CD4-positive, alpha-beta memory T cell (primary cell): ENCODE measurements at regions of chr17 and their contacts with region 1.

Region 1: DNA sequence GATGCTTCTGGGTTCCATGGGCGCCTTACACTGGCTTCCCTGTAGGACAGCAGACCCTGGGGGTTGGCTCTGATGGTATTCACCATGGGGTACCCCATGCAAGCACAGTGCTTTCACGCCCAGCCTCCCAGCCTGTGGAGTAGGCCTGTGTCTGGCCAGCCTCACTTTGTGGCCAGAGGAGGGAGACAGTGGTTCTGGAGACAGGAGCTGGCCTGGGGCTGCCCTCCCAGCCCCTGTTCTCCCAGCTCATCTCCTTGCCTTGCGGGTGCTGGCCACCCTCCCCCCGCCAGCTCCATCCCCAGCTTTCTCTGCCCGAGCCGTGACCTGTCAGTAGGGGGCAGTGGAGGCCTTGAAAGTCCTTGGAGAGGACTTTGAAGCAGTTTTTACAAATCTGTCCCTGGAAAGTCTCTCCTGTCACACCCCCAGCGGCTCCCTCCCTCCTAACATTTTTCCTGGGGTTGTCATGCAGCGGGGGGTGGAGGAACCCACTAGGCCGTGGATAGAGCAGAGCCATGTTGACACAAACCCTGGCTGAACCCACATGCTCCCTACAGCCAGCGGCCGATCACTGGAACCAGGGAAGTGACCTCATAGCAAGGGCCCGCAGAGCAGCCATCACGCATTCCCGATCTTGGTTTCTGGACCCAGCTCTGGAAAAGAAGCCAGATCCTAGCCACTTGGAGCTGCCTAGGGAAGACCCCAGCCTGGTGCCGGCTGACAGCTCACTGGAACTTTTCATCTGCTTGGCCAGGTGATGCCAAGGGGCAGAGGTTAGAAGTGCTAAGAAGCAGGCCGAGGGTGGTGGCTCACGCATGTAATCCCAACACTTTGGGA is 289.4 kb downstream of the SEC14L1 start:
- DNase-seq: peak; percentile 74 to 84 (median 77)
- H3K4me3 ChIP-seq: no peak overlapping the region
- H3K4me3 Mint-ChIP-seq: peak overlapping the region in 5 of 8 donors; percentile 29 to 68 (median 47)
- H3K27ac ChIP-seq: no peak overlapping the region
- H3K27ac Mint-ChIP-seq: peak overlapping the region; percentile 64 to 90 (median 80)
- H3K4me1 ChIP-seq: peaks cover 100% of the 10 kb centered on the region
- H3K4me1 Mint-ChIP-seq: peaks cover 55 to 96% (median 78%) of the 10 kb centered on the region in 4 donors
- H3K27me3 ChIP-seq: no peaks in the 10 kb centered on the region
- H3K27me3 Mint-ChIP-seq: no peaks in the 10 kb centered on the region

Region 2: DNA sequence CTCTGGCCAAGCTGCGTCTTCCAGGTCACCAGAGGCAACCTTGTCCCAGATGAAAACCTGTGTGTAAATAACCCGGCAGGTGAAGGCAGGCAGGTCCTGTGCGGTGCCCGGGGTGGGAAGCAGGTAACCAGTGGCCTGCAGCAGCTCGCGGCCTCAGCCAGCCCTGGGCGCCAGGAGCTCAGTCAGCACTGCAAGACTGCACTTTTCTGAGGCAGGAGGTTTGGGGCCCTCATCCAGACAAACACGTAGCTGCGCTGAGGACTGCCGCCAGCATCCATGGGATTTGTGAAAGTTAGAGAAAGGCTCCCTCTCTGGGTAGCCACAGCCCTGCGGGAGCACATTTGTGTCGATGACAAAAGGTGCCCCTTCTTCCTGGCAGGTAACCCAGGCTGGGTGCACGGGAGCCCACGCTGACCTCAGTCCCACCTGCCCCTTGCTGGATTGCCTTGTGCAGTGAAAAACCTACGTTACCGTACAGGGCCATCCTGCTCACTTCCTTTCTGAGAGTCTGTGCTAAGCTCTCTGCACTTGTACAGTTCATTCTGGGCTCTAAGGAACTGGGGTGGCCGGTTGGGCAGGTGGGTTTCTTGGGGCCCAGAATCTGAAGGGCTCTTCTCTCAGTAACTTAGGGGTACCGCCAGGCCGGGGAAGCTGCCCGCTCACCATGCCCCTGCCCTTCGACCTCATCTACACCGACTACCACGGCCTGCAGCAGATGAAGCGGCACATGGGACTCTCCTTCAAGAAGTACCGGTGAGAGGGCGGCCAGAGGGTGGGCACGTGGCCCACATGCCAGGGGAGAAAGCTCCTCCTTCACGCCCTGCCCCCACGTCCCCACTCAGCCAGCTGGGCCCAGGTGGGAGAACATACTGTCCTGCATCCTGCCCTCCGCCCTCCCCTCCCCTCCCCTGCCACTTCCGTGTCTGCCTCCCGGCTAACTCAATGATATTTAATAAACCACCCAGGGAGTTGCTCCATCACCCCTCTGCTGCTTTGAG is 505.5 kb before region 1 on chr17:
- CTCF ChIA-PET with region 1: no interaction called
- POLR2A ChIA-PET with region 1: no interaction called
- intact Hi-C with region 1: no loop called
- DNase-seq: no peak
- H3K4me3 ChIP-seq: no peak overlapping the region
- H3K4me3 Mint-ChIP-seq: no peak overlapping the region
- H3K27ac ChIP-seq: no peak overlapping the region
- H3K27ac Mint-ChIP-seq: peak overlapping the region in 3 of 7 donors; percentile 6 to 78 (median 70)
- H3K4me1 ChIP-seq: no peaks in the 10 kb centered on the region
- H3K4me1 Mint-ChIP-seq: no peaks in the 10 kb centered on the region
- H3K27me3 ChIP-seq: no peaks in the 10 kb centered on the region
- H3K27me3 Mint-ChIP-seq: peaks cover 2 to 4% of the 10 kb centered on the region in 2 donors

Region 3: GRCh38 chr17:77372444-77373298 is 57.5 kb before region 1 on chr17:
- CTCF ChIA-PET with region 1: interaction called, 11 read pairs
- POLR2A ChIA-PET with region 1: interaction called, 6,031 read pairs
- intact Hi-C with region 1: no loop called
- DNase-seq: peak; percentile 61 to 74 (median 68)
- H3K4me3 ChIP-seq: peak overlapping the region; percentile 52 to 95
- H3K4me3 Mint-ChIP-seq: peak overlapping the region; percentile 82 to 100 (median 87)
- H3K27ac ChIP-seq: peak overlapping the region; percentile 68
- H3K27ac Mint-ChIP-seq: peak overlapping the region; percentile 81 to 93 (median 90)
- H3K4me1 ChIP-seq: peaks cover 66% of the 10 kb centered on the region
- H3K4me1 Mint-ChIP-seq: peaks cover 43 to 84% (median 55%) of the 10 kb centered on the region in 4 donors
- H3K27me3 ChIP-seq: no peaks in the 10 kb centered on the region
- H3K27me3 Mint-ChIP-seq: no peaks in the 10 kb centered on the region

Region 4: DNA sequence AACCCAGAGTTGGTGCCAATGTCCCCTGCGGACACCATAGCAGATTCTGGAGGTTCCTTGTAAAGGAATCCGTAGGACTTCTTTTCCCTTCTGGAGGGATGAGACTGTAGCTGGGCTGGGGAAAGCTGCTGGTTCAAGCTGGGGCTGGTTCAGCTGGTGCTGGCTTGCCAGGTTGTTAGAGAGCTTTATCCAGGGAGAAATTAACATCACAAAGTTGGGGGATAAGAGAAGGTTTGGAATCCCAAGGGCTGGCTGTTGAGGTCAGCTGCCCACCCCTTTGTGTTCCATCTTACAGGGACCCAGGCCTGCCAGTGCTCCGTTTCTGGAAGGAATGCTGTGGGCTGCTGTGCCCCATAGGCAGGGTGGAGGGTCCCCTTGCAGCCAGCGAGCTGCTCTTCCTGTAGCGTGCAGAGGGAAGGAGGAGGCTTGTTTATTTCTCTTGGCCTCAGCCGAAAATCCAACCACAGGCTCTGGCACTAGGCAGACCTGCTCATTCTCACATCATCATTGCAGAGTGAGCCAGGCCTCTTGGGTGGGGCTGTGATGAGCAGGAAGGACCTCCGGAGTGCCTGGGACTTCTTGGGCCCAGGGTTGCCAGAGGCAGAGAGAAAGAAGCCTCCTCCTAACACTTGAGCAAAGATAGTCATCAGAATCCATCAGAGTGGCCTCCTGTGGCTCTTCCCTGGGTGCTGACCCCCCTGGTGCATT is 38.3 kb before region 1 on chr17:
- CTCF ChIA-PET with region 1: interaction called, 15 read pairs
- POLR2A ChIA-PET with region 1: interaction called, 6,031 read pairs
- intact Hi-C with region 1: no loop called
- DNase-seq: peak; percentile 39 to 75 (median 48)
- H3K4me3 ChIP-seq: peak overlapping the region in 1 of 2 donors; percentile 11
- H3K4me3 Mint-ChIP-seq: peak overlapping the region; percentile 57 to 84 (median 67)
- H3K27ac ChIP-seq: peak overlapping the region; percentile 50
- H3K27ac Mint-ChIP-seq: peak overlapping the region; percentile 86 to 95 (median 89)
- H3K4me1 ChIP-seq: peaks cover 95% of the 10 kb centered on the region
- H3K4me1 Mint-ChIP-seq: peaks cover 39 to 91% (median 78%) of the 10 kb centered on the region in 4 donors
- H3K27me3 ChIP-seq: no peaks in the 10 kb centered on the region
- H3K27me3 Mint-ChIP-seq: no peaks in the 10 kb centered on the region

Region 5: GRCh38 chr17:77444984-77445759 is 15.0 kb after region 1 on chr17:
- CTCF ChIA-PET with region 1: interaction called, 74 read pairs
- POLR2A ChIA-PET with region 1: interaction called, 6,031 read pairs
- intact Hi-C with region 1: loop called (anchors 1 kb)
- DNase-seq: peak; percentile 92 to 95 (median 94)
- H3K4me3 ChIP-seq: peak overlapping the region; percentile 54 to 64
- H3K4me3 Mint-ChIP-seq: peak overlapping the region; percentile 73 to 89 (median 86)
- H3K27ac ChIP-seq: peak overlapping the region; percentile 90
- H3K27ac Mint-ChIP-seq: peak overlapping the region; percentile 90 to 99 (median 99)
- H3K4me1 ChIP-seq: peaks cover 100% of the 10 kb centered on the region
- H3K4me1 Mint-ChIP-seq: peaks cover 65 to 99% (median 89%) of the 10 kb centered on the region in 4 donors
- H3K27me3 ChIP-seq: no peaks in the 10 kb centered on the region
- H3K27me3 Mint-ChIP-seq: no peaks in the 10 kb centered on the region

Region 6: GRCh38 chr17:77456951-77457548 is 26.9 kb after region 1 on chr17:
- CTCF ChIA-PET with region 1: interaction called, 32 read pairs
- POLR2A ChIA-PET with region 1: interaction called, 6,031 read pairs
- intact Hi-C with region 1: no loop called
- DNase-seq: peak in 1 of 5 donors; percentile 64
- H3K4me3 ChIP-seq: peak overlapping the region; percentile 73 to 94
- H3K4me3 Mint-ChIP-seq: peak overlapping the region; percentile 90 to 100 (median 96)
- H3K27ac ChIP-seq: peak overlapping the region; percentile 73
- H3K27ac Mint-ChIP-seq: peak overlapping the region; percentile 90 to 100 (median 98)
- H3K4me1 ChIP-seq: peaks cover 74% of the 10 kb centered on the region
- H3K4me1 Mint-ChIP-seq: peaks cover 31 to 92% (median 55%) of the 10 kb centered on the region in 4 donors
- H3K27me3 ChIP-seq: no peaks in the 10 kb centered on the region
- H3K27me3 Mint-ChIP-seq: no peaks in the 10 kb centered on the region

Region 7: GRCh38 chr17:77471984-77472461 is 41.9 kb after region 1 on chr17:
- CTCF ChIA-PET with region 1: interaction called, 22 read pairs
- POLR2A ChIA-PET with region 1: interaction called, 6,031 read pairs
- intact Hi-C with region 1: loop called (anchors 5 kb)
- DNase-seq: peak in 1 of 5 donors; percentile 34
- H3K4me3 ChIP-seq: peak overlapping the region; percentile 18 to 48
- H3K4me3 Mint-ChIP-seq: peak overlapping the region; percentile 43 to 91 (median 74)
- H3K27ac ChIP-seq: peak overlapping the region; percentile 51
- H3K27ac Mint-ChIP-seq: peak overlapping the region; percentile 82 to 98 (median 93)
- H3K4me1 ChIP-seq: peaks cover 100% of the 10 kb centered on the region
- H3K4me1 Mint-ChIP-seq: peaks cover 67 to 99% (median 90%) of the 10 kb centered on the region in 4 donors
- H3K27me3 ChIP-seq: no peaks in the 10 kb centered on the region
- H3K27me3 Mint-ChIP-seq: no peaks in the 10 kb centered on the region

Region 8: GRCh38 chr17:77494664-77495435 is 64.7 kb after region 1 on chr17:
- CTCF ChIA-PET with region 1: interaction called, 144 read pairs
- POLR2A ChIA-PET with region 1: interaction called, 38 read pairs
- intact Hi-C with region 1: loop called (anchors 1 kb)
- DNase-seq: peak; percentile 64 to 78 (median 70)
- H3K4me3 ChIP-seq: no peak overlapping the region
- H3K4me3 Mint-ChIP-seq: peak overlapping the region in 2 of 8 donors; percentile 5 to 35
- H3K27ac ChIP-seq: peak overlapping the region; percentile 10
- H3K27ac Mint-ChIP-seq: peak overlapping the region; percentile 57 to 94 (median 87)
- H3K4me1 ChIP-seq: peaks cover 41% of the 10 kb centered on the region
- H3K4me1 Mint-ChIP-seq: peaks cover 8 to 45% (median 17%) of the 10 kb centered on the region in 4 donors
- H3K27me3 ChIP-seq: no peaks in the 10 kb centered on the region
- H3K27me3 Mint-ChIP-seq: no peaks in the 10 kb centered on the region